Activated T-helper 1 cell treated with anti-CD3 and anti-CD28 coated beads, Interleukin-12 subunit alpha, Interleukin-12 subunit beta, Interleukin-2, Interleukin-4 antibody, amounts not matched to agents 30 ng/mL and 10 ng/mL and 1 ng/mL, durations not matched to agents 14 hours and 24 hours and 36 hours (primary cell): ENCODE measurements at regions of chr15 and their contacts with region 1.

Region 1: GRCh38 chr15:85543741-85544155 is 163.3 kb downstream of the AKAP13 start:
- DNase-seq: peak; percentile 22
- H3K4me3 Mint-ChIP-seq: peak overlapping the region; percentile 50
- H3K27ac Mint-ChIP-seq: peak overlapping the region; percentile 59
- H3K4me1 Mint-ChIP-seq: peaks cover 83% of the 10 kb centered on the region
- H3K27me3 Mint-ChIP-seq: no peaks in the 10 kb centered on the region

Region 2: GRCh38 chr15:85504749-85505676 is 38.7 kb before region 1 on chr15:
- intact Hi-C with region 1: loop called (anchors 5 kb)
- DNase-seq: peak; percentile 5
- H3K4me3 Mint-ChIP-seq: no peak overlapping the region
- H3K27ac Mint-ChIP-seq: no peak overlapping the region
- H3K4me1 Mint-ChIP-seq: peaks cover 20% of the 10 kb centered on the region
- H3K27me3 Mint-ChIP-seq: no peaks in the 10 kb centered on the region

Region 3: DNA sequence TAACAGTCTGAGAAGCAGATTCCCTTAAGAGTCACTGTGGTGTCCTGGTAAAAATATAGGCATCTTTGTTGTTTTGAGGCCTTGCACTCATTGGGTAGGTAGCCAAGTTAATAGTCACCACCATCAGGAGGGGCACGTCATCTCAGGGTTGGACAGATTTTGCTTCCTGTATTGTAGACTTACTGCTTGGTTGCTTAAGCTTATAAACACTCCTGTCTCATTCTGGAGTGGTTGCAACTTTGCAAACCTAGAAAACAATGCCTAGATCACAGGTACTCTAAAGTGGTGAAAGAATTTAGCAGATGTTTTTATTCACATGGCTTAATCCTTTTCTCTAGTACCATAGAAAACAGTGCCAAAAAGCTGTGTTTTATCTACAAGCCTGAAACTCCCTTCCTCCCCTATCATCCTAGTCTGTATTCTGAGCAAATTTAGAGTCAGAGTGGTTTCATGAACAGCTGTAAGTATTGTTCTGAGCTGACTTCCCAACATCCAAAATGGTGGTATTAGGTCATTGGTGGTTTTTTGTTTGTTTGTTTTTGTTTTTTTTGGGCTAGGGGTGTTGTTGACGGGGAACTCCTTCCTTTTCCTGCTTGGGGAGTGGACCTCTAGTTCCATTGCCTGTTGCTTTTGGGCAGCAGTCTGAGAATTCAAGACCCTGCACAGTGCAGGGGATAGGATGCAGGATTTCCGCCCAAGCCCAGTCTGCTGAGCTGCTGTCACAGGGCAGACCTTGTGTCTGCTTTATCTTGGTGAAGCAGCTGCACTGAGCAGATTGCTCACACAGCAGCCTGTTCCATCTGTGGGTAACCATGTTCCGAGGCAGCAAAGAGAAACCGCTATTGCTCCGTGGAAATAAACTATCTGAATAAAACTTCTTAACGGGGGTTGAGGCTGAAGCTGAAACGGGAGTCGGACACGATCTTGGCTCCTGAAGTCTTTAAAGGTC is 38.7 kb after region 1 on chr15:
- intact Hi-C with region 1: loop called (anchors 1 kb)
- DNase-seq: peak; percentile 67
- H3K4me3 Mint-ChIP-seq: peak overlapping the region; percentile 84
- H3K27ac Mint-ChIP-seq: peak overlapping the region; percentile 95
- H3K4me1 Mint-ChIP-seq: peaks cover 84% of the 10 kb centered on the region
- H3K27me3 Mint-ChIP-seq: no peaks in the 10 kb centered on the region

Region 4: GRCh38 chr15:85607842-85608241 is 64.1 kb after region 1 on chr15:
- intact Hi-C with region 1: no loop called
- DNase-seq: no peak
- H3K4me3 Mint-ChIP-seq: no peak overlapping the region
- H3K27ac Mint-ChIP-seq: peak overlapping the region; percentile 21
- H3K4me1 Mint-ChIP-seq: peaks cover 18% of the 10 kb centered on the region
- H3K27me3 Mint-ChIP-seq: no peaks in the 10 kb centered on the region

Region 5: DNA sequence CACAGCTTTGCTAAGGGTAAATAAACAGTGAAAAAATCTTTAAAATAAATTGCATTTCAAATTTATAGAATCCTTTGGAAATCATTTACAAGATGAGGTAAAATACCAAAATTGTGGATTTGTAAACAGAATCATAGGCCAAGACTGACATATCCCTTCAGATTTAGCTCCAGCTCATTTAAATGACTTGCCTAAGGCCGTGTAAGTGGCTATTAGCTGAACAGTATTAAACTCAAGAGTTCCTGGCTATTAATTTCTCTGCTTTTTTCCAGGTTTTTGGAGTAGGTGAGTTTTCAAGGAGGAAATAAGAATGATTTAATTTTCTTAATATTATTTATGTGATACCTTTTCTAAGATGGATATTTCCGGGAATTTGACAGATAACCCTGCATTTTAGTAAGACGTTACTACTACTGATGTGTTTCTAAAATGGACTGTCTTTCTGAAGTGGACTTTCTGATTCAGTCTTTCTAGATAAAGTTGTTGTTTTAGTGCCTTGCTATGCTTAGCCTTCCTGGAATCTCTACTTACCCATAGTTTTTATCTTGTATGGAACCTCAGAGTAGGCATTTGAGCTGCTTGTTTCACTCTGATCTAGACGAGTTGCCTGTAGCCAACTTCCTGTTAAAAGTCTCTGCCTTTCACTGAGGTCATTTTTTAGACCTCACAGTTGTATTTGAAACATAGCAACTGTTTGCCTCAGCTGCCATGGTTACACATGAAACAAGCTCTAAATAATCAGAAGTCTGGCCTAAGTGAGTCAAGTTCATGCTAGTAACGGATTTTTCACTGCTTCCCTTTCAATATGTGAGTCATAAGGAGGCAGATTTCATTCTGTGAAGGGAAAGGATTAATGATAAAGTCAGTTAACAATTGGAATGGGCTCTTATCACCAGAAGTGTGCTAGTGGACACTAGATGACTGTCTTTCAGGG is 124.0 kb after region 1 on chr15:
- intact Hi-C with region 1: loop called (anchors 5 kb)
- DNase-seq: peak; percentile 46
- H3K4me3 Mint-ChIP-seq: peak overlapping the region; percentile 20
- H3K27ac Mint-ChIP-seq: peak overlapping the region; percentile 97
- H3K4me1 Mint-ChIP-seq: peaks cover 22% of the 10 kb centered on the region
- H3K27me3 Mint-ChIP-seq: no peaks in the 10 kb centered on the region

Region 6: GRCh38 chr15:85707519-85708338 is 164.0 kb after region 1 on chr15:
- intact Hi-C with region 1: loop called (anchors 1 kb)
- DNase-seq: no peak
- H3K4me3 Mint-ChIP-seq: peak overlapping the region; percentile 83
- H3K27ac Mint-ChIP-seq: peak overlapping the region; percentile 99
- H3K4me1 Mint-ChIP-seq: peaks cover 88% of the 10 kb centered on the region
- H3K27me3 Mint-ChIP-seq: no peaks in the 10 kb centered on the region

Region 7: GRCh38 chr15:86063356-86064095 is 519.8 kb after region 1 on chr15:
- intact Hi-C with region 1: no loop called
- DNase-seq: no peak
- H3K4me3 Mint-ChIP-seq: no peak overlapping the region
- H3K27ac Mint-ChIP-seq: no peak overlapping the region
- H3K4me1 Mint-ChIP-seq: no peaks in the 10 kb centered on the region
- H3K27me3 Mint-ChIP-seq: peaks cover 9% of the 10 kb centered on the region